Esophagus muscularis mucosa (tissue), 4 donors: ENCODE measurements at regions of chr20 and their contacts with region 1.

Region 1: DNA sequence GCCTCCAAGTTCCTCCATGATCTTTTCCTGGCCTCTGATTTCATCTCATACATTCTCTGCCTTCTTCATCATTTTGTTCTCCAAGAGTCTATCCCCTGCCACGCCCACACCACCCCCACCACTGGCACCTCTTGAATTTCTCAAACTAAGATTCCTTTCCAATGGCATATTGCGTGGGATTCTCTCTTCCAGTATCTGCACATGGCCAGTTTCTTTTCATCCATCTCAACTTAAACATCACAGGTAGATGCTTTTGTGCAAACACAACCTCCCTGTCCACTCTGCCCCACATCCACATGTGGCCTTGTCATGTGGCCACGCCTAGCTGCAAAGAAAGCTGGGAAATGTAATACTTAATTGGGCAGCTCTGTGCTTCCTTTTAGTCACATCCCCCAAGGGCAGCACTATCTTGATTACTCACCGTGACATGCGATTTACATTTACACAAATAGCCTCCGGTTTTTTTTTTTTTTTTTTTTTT is 33.4 kb upstream of the ZMYND8 start:
- DNase-seq: no peak
- H3K4me3 ChIP-seq: no peak overlapping the region
- H3K27ac ChIP-seq: no peak overlapping the region
- H3K4me1 ChIP-seq: peaks cover 0 to 2% (median under 1%) of the 10 kb centered on the region in 4 donors
- H3K27me3 ChIP-seq: no peaks in the 10 kb centered on the region
- CTCF ChIP-seq: no peak
- EP300 ChIP-seq: no peak
- POLR2A ChIP-seq: no peak

Region 2: GRCh38 chr20:47272893-47273590 is 116.9 kb before region 1 on chr20:
- intact Hi-C with region 1: loop called (anchors 2 kb)
- DNase-seq: no peak
- H3K4me3 ChIP-seq: no peak overlapping the region
- H3K27ac ChIP-seq: peak overlapping the region; percentile 76 to 83 (median 79)
- H3K4me1 ChIP-seq: peaks cover 48 to 68% (median 63%) of the 10 kb centered on the region in 4 donors
- H3K27me3 ChIP-seq: no peaks in the 10 kb centered on the region
- CTCF ChIP-seq: peak; percentile 86 to 97 (median 91)
- EP300 ChIP-seq: no peak
- POLR2A ChIP-seq: no peak